Spleen (tissue), 13 donors: ENCODE measurements at regions of chr9 and their contacts with region 1.

Region 1: GRCh38 chr9:134698587-134699342 is 57.2 kb downstream of the COL5A1 start:
- DNase-seq: peak; percentile 89
- H3K4me3 ChIP-seq: no peak overlapping the region
- H3K27ac ChIP-seq: no peak overlapping the region
- H3K4me1 ChIP-seq: peaks cover 0 to 17% (median 9%) of the 10 kb centered on the region in 6 donors
- H3K27me3 ChIP-seq: peaks cover 0 to 15% (median 0%) of the 10 kb centered on the region in 7 donors
- CTCF ChIP-seq: peak; percentile 55 to 93 (median 84)
- POLR2A ChIP-seq: no peak

Region 2: DNA sequence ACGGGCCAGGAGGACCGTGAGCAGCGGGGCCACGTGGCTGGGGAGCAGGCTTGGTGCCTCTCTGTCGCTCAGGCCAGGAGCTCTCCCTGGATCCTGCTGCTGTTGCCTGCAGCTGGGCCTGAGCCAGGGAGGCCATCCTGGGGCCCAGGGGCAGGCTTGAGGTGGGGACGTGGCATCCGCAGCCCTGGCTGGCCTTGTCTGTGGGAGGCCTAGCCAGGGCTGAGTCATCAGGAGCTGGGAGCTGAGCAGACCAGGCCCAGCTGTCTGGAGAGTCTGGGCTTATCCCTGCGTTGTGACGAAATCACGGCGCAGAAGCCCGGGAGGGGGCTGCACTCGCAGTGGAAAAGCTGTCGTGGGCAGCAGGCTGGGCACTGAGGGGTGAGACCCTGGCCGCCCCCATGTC is 196.0 kb before region 1 on chr9:
- intact Hi-C with region 1: no loop called
- DNase-seq: no peak
- H3K4me3 ChIP-seq: no peak overlapping the region
- H3K27ac ChIP-seq: no peak overlapping the region
- H3K4me1 ChIP-seq: peaks cover 0 to 22% (median 14%) of the 10 kb centered on the region in 6 donors
- H3K27me3 ChIP-seq: peaks cover 0 to 47% (median 27%) of the 10 kb centered on the region in 7 donors
- CTCF ChIP-seq: no peak
- POLR2A ChIP-seq: no peak

Region 3: GRCh38 chr9:134644725-134645606 is 53.8 kb before region 1 on chr9:
- intact Hi-C with region 1: no loop called
- DNase-seq: no peak
- H3K4me3 ChIP-seq: peak overlapping the region in 3 of 8 donors; percentile 8 to 34 (median 11)
- H3K27ac ChIP-seq: peak overlapping the region in 7 of 8 donors; percentile 32 to 64 (median 50)
- H3K4me1 ChIP-seq: peaks cover 0 to 66% (median 26%) of the 10 kb centered on the region in 6 donors
- H3K27me3 ChIP-seq: peaks cover 0 to 38% (median 18%) of the 10 kb centered on the region in 7 donors
- CTCF ChIP-seq: no peak
- POLR2A ChIP-seq: no peak

Region 4: GRCh38 chr9:134983074-134983473 is 284.3 kb after region 1 on chr9:
- intact Hi-C with region 1: loop called (anchors 10 kb)
- DNase-seq: peak; percentile 89
- H3K4me3 ChIP-seq: no peak overlapping the region
- H3K27ac ChIP-seq: peak overlapping the region in 1 of 8 donors; percentile 13
- H3K4me1 ChIP-seq: peaks cover 0 to 10% (median 8%) of the 10 kb centered on the region in 6 donors
- H3K27me3 ChIP-seq: peaks cover 0 to 7% (median 0%) of the 10 kb centered on the region in 7 donors
- CTCF ChIP-seq: peak in 10 of 11 experiments; percentile 34 to 77 (median 64)
- POLR2A ChIP-seq: no peak

Region 5: GRCh38 chr9:135410831-135411473 is 712.2 kb after region 1 on chr9:
- intact Hi-C with region 1: loop called (anchors 5 kb)
- DNase-seq: peak; percentile 64
- H3K4me3 ChIP-seq: no peak overlapping the region
- H3K27ac ChIP-seq: no peak overlapping the region
- H3K4me1 ChIP-seq: peaks cover 0 to 8% (median 6%) of the 10 kb centered on the region in 6 donors
- H3K27me3 ChIP-seq: peaks cover 0 to 68% (median 15%) of the 10 kb centered on the region in 7 donors
- CTCF ChIP-seq: no peak
- POLR2A ChIP-seq: no peak